BJ (cell line): ENCODE measurements at regions of chr17 and their contacts with region 1.

Region 1: DNA sequence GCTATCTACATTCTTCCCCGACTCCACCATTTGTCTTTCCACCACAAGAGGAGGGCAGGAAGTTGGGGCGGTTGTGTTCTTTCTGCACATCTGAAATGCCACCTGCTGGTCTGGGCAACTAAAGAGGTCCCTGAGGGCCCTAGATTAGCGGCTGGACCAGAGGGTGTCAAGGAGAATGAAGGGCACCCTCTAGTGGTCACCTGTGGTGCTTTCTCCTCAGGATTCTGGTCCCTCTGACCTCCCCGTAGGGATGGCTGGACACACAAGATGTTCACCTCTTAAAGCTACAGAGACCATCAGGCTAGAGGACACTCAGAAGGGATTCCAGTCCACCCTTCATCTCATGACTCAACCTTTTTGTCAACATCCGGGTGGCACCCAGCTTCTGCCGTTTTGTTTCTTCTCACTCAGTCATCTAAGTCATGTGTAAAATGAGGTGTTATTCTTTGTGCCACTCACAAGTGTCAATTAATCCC is 2.9 kb upstream of the SCIMP start:
- DNase-seq: no peak
- H3K4me3 ChIP-seq: no peak overlapping the region
- H3K27me3 ChIP-seq: no peaks in the 10 kb centered on the region
- CTCF ChIP-seq: peak; percentile 57

Region 2: GRCh38 chr17:5219551-5219950 is 18.0 kb before region 1 on chr17:
- CTCF ChIA-PET with region 1: interaction called, 10 read pairs
- POLR2A ChIA-PET with region 1: no interaction called
- DNase-seq: no peak
- H3K4me3 ChIP-seq: no peak overlapping the region
- H3K27me3 ChIP-seq: no peaks in the 10 kb centered on the region
- CTCF ChIP-seq: no peak

Region 3: DNA sequence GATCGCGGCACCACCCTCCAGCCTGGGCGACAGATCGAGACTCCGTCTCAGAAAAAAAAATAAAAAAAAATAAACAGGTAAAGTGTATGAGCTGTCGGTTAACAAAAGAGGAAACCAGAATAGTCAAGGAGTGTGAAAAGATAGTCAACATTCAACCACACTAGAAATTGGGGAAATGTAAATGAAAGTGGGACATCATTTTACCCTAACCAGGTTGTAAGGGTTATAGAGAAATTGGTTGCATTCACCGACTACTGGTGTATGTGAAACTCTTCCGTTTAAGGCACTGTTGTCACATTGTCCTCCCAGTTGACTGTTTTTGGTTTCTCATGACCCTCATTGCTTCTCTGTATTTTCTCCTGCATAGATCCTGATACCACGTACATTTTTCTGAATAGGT is 107.3 kb after region 1 on chr17:
- CTCF ChIA-PET with region 1: no interaction called
- POLR2A ChIA-PET with region 1: no interaction called
- DNase-seq: no peak
- H3K4me3 ChIP-seq: no peak overlapping the region
- H3K27me3 ChIP-seq: no peaks in the 10 kb centered on the region
- CTCF ChIP-seq: no peak